Naive thymus-derived CD4-positive, alpha-beta T cell (primary cell): ENCODE measurements at regions of chr2 and their contacts with region 1.

Region 1: GRCh38 chr2:196205881-196206435 is 34.6 kb upstream of the STK17B start:
- DNase-seq: no peak
- ATAC-seq: no peak
- H3K4me3 ChIP-seq: no peak overlapping the region
- H3K4me3 Mint-ChIP-seq: no peak overlapping the region
- H3K27ac ChIP-seq: no peak overlapping the region
- H3K27ac Mint-ChIP-seq: peak overlapping the region in 7 of 9 donors; percentile 28 to 85 (median 66)
- H3K4me1 ChIP-seq: peaks cover 17 to 31% of the 10 kb centered on the region in 2 donors
- H3K4me1 Mint-ChIP-seq: peaks cover 29 to 75% (median 51%) of the 10 kb centered on the region in 7 donors
- H3K27me3 ChIP-seq: no peaks in the 10 kb centered on the region
- H3K27me3 Mint-ChIP-seq: no peaks in the 10 kb centered on the region

Region 2: GRCh38 chr2:195021711-195022507 is 1184.0 kb before region 1 on chr2:
- CTCF ChIA-PET with region 1: no interaction called
- POLR2A ChIA-PET with region 1: no interaction called
- intact Hi-C with region 1: no loop called
- DNase-seq: no peak
- ATAC-seq: no peak
- H3K4me3 ChIP-seq: no peak overlapping the region
- H3K4me3 Mint-ChIP-seq: no peak overlapping the region
- H3K27ac ChIP-seq: no peak overlapping the region
- H3K27ac Mint-ChIP-seq: no peak overlapping the region
- H3K4me1 ChIP-seq: no peaks in the 10 kb centered on the region
- H3K4me1 Mint-ChIP-seq: peaks cover 0 to 9% (median 0%) of the 10 kb centered on the region in 7 donors
- H3K27me3 ChIP-seq: no peaks in the 10 kb centered on the region
- H3K27me3 Mint-ChIP-seq: peaks cover 0 to 17% (median 0%) of the 10 kb centered on the region in 5 donors

Region 3: GRCh38 chr2:195782156-195782555 is 423.8 kb before region 1 on chr2:
- CTCF ChIA-PET with region 1: no interaction called
- POLR2A ChIA-PET with region 1: no interaction called
- intact Hi-C with region 1: no loop called
- DNase-seq: no peak
- ATAC-seq: no peak
- H3K4me3 ChIP-seq: no peak overlapping the region
- H3K4me3 Mint-ChIP-seq: no peak overlapping the region
- H3K27ac ChIP-seq: no peak overlapping the region
- H3K27ac Mint-ChIP-seq: no peak overlapping the region
- H3K4me1 ChIP-seq: no peaks in the 10 kb centered on the region
- H3K4me1 Mint-ChIP-seq: no peaks in the 10 kb centered on the region
- H3K27me3 ChIP-seq: no peaks in the 10 kb centered on the region
- H3K27me3 Mint-ChIP-seq: peaks cover 0 to 3% (median 0%) of the 10 kb centered on the region in 5 donors

Region 4: GRCh38 chr2:195961873-195962272 is 244.1 kb before region 1 on chr2:
- CTCF ChIA-PET with region 1: no interaction called
- POLR2A ChIA-PET with region 1: no interaction called
- intact Hi-C with region 1: no loop called
- DNase-seq: no peak
- ATAC-seq: peak; percentile 45
- H3K4me3 ChIP-seq: no peak overlapping the region
- H3K4me3 Mint-ChIP-seq: no peak overlapping the region
- H3K27ac ChIP-seq: no peak overlapping the region
- H3K27ac Mint-ChIP-seq: no peak overlapping the region
- H3K4me1 ChIP-seq: no peaks in the 10 kb centered on the region
- H3K4me1 Mint-ChIP-seq: peaks cover 0 to 2% (median 0%) of the 10 kb centered on the region in 7 donors
- H3K27me3 ChIP-seq: no peaks in the 10 kb centered on the region
- H3K27me3 Mint-ChIP-seq: peaks cover 4 to 22% (median 18%) of the 10 kb centered on the region in 5 donors

Region 5: GRCh38 chr2:196182439-196183171 is 23.4 kb before region 1 on chr2:
- CTCF ChIA-PET with region 1: interaction called, 10 read pairs
- POLR2A ChIA-PET with region 1: interaction called, 359 read pairs
- intact Hi-C with region 1: loop called (anchors 1 kb)
- DNase-seq: peak in 1 of 9 donors; percentile 48
- ATAC-seq: peak; percentile 39
- H3K4me3 ChIP-seq: peak overlapping the region; percentile 34
- H3K4me3 Mint-ChIP-seq: peak overlapping the region; percentile 27 to 80 (median 70)
- H3K27ac ChIP-seq: peak overlapping the region; percentile 72
- H3K27ac Mint-ChIP-seq: peak overlapping the region; percentile 89 to 97 (median 93)
- H3K4me1 ChIP-seq: peaks cover 69 to 76% of the 10 kb centered on the region in 2 donors
- H3K4me1 Mint-ChIP-seq: peaks cover 55 to 98% (median 85%) of the 10 kb centered on the region in 7 donors
- H3K27me3 ChIP-seq: no peaks in the 10 kb centered on the region
- H3K27me3 Mint-ChIP-seq: no peaks in the 10 kb centered on the region

Region 6: DNA sequence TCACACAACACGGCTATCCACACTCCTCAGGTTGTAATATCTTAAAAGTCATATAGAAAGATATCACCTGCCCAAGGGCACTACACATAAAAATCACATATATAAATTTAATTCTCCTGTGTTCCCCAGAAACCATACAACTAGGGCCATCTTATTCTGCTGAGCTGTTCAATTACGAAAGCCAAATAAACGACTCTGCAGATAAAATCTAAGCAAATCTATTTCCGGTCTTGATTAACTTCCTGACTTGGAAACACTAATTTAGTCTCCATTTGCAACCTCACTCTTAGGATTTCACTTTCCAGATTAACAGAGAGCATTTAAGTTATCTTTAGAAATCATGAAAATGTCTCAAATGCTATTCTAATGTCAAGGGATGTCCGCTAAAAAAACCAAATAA is 10.7 kb before region 1 on chr2:
- CTCF ChIA-PET with region 1: interaction called, 5 read pairs
- POLR2A ChIA-PET with region 1: interaction called, 73 read pairs
- intact Hi-C with region 1: loop called (anchors 1 kb)
- DNase-seq: no peak
- ATAC-seq: no peak
- H3K4me3 ChIP-seq: peak overlapping the region; percentile 30
- H3K4me3 Mint-ChIP-seq: peak overlapping the region in 9 of 10 donors; percentile 11 to 71 (median 53)
- H3K27ac ChIP-seq: peak overlapping the region; percentile 23
- H3K27ac Mint-ChIP-seq: peak overlapping the region in 8 of 9 donors; percentile 33 to 85 (median 64)
- H3K4me1 ChIP-seq: peaks cover 17 to 48% of the 10 kb centered on the region in 2 donors
- H3K4me1 Mint-ChIP-seq: peaks cover 25 to 84% (median 72%) of the 10 kb centered on the region in 7 donors
- H3K27me3 ChIP-seq: no peaks in the 10 kb centered on the region
- H3K27me3 Mint-ChIP-seq: no peaks in the 10 kb centered on the region

Region 7: DNA sequence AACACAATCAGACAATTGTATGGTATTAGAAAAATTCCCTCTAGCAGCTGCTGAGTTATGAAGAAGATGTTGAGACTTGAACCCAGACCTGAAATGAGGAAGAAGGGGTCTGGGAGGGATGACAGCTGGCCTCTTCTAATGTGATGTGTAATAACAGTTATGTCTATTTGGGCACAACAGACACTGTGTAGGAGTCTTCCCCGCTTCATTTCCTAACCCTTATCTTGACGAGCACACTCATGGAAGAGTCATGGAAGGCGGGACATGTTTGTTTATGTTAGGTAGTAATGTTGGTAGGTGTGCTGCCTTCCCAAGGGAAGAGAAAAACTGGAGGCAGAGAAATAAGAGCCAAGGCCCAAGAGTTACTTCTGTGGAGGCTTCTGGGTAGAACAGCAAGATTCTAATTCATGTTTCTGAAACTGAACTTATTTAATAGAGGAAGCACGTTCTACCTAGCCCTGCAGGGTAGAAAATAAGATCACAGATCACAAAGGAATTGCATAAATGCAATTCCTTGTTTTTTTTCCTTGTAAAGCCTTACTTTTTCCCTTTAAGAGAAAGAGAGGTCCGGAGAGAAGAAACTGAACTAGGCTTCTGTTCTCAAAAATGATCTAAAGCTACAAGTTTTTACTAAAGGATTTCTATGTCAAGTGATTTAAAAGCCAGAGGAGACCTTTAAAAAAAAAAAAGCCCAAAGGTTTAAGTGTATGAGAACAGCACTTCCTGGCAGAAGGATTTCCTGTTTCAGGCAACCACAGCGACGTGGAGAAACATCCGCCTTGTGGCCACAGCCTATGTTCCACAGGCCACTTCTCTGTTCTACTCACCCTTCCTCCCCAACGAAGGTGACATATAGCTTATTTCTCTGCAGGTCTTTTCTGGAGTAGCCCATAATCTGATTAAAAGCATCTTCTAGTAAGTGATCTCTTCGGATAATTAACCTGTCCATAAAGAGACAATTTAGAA is 33.9 kb after region 1 on chr2:
- CTCF ChIA-PET with region 1: interaction called, 3 read pairs
- POLR2A ChIA-PET with region 1: interaction called, 5 read pairs
- intact Hi-C with region 1: loop called (anchors 1 kb)
- DNase-seq: peak; percentile 33 to 90 (median 83)
- ATAC-seq: peak; percentile 87
- H3K4me3 ChIP-seq: peak overlapping the region; percentile 36
- H3K4me3 Mint-ChIP-seq: peak overlapping the region; percentile 64 to 87 (median 76)
- H3K27ac ChIP-seq: peak overlapping the region; percentile 71
- H3K27ac Mint-ChIP-seq: peak overlapping the region; percentile 90 to 99 (median 97)
- H3K4me1 ChIP-seq: peaks cover 57 to 60% of the 10 kb centered on the region in 2 donors
- H3K4me1 Mint-ChIP-seq: peaks cover 55 to 90% (median 80%) of the 10 kb centered on the region in 7 donors
- H3K27me3 ChIP-seq: no peaks in the 10 kb centered on the region
- H3K27me3 Mint-ChIP-seq: no peaks in the 10 kb centered on the region